H1 (cell line): ENCODE measurements at regions of chr3 and their contacts with region 1.

Region 1: GRCh38 chr3:13839726-13840320 is 40.0 kb downstream of the WNT7A start:
- DNase-seq: no peak
- H3K4me3 ChIP-seq: no peak overlapping the region
- H3K27ac ChIP-seq: no peak overlapping the region
- H3K4me1 ChIP-seq: no peaks in the 10 kb centered on the region
- H3K27me3 ChIP-seq: no peaks in the 10 kb centered on the region
- CTCF ChIP-seq: no peak
- EP300 ChIP-seq: no peak
- POLR2A ChIP-seq: no peak
- RAD21 ChIP-seq: no peak

Region 2: DNA sequence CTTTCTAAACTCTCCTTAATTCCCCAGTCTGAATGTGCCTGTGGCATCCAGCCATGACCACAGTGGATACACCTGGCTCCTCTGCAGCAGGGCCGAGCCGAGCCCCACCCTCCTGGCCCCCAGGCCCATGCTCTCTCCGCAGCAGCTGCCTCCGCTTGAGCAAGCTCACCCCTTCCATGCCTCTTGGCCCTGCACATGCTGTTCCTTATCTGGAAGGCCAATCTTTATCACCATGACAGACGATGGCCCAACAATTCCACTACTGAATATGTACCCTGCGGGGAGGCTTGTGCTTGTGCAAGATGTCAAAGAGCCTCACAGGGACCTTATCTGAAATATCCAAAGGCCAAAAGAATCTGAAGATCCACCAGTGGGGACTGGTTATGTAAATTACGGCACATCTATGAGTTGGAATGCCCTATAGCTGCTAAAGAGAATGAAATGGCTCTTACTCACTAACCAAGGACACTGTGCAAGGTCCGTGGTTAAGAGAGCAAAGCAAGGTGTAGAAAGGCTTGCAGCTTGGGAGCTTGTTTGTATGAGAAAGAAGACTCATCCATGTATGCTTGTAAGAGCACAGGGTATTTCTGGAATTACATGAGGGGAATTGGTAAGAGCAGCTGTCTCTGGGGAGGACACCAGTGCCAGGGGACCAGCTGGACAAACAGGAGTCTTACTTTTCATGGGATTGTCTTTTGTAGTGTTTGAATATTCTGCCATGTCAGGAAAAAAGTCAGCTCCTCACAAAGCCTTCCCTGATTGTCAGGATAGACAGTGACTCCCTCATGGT is 15.1 kb before region 1 on chr3:
- CTCF ChIA-PET with region 1: interaction called, 21 read pairs
- POLR2A ChIA-PET with region 1: no interaction called
- DNase-seq: no peak
- H3K4me3 ChIP-seq: no peak overlapping the region
- H3K27ac ChIP-seq: no peak overlapping the region
- H3K4me1 ChIP-seq: peaks cover 0 to 2% (median 0%) of the 10 kb centered on the region in 4 experiments; a peak in 1 of 7 replicates
- H3K27me3 ChIP-seq: no peaks in the 10 kb centered on the region
- CTCF ChIP-seq: no peak
- EP300 ChIP-seq: no peak
- POLR2A ChIP-seq: no peak
- RAD21 ChIP-seq: no peak

Region 3: GRCh38 chr3:13850158-13850945 is 10.5 kb after region 1 on chr3:
- CTCF ChIA-PET with region 1: interaction called, 12 read pairs
- POLR2A ChIA-PET with region 1: no interaction called
- DNase-seq: peak in 1 of 2 experiments; percentile 68
- H3K4me3 ChIP-seq: no peak overlapping the region
- H3K27ac ChIP-seq: no peak overlapping the region
- H3K4me1 ChIP-seq: peaks cover 0 to 19% (median 4%) of the 10 kb centered on the region in 4 experiments; a peak in 2 of 7 replicates
- H3K27me3 ChIP-seq: no peaks in the 10 kb centered on the region
- CTCF ChIP-seq: no peak
- EP300 ChIP-seq: no peak
- POLR2A ChIP-seq: no peak
- RAD21 ChIP-seq: no peak

Region 4: GRCh38 chr3:14194865-14195264 is 355.0 kb after region 1 on chr3:
- CTCF ChIA-PET with region 1: no interaction called
- POLR2A ChIA-PET with region 1: no interaction called
- DNase-seq: peak in 1 of 2 experiments; percentile 31
- H3K4me3 ChIP-seq: no peak overlapping the region
- H3K27ac ChIP-seq: no peak overlapping the region
- H3K4me1 ChIP-seq: no peaks in the 10 kb centered on the region; a peak in 1 of 7 replicates
- H3K27me3 ChIP-seq: no peaks in the 10 kb centered on the region
- CTCF ChIP-seq: no peak
- EP300 ChIP-seq: no peak
- POLR2A ChIP-seq: no peak
- RAD21 ChIP-seq: no peak